ENCODE measurements at regions of chr13 and their contacts with region 1.

Region 1: DNA sequence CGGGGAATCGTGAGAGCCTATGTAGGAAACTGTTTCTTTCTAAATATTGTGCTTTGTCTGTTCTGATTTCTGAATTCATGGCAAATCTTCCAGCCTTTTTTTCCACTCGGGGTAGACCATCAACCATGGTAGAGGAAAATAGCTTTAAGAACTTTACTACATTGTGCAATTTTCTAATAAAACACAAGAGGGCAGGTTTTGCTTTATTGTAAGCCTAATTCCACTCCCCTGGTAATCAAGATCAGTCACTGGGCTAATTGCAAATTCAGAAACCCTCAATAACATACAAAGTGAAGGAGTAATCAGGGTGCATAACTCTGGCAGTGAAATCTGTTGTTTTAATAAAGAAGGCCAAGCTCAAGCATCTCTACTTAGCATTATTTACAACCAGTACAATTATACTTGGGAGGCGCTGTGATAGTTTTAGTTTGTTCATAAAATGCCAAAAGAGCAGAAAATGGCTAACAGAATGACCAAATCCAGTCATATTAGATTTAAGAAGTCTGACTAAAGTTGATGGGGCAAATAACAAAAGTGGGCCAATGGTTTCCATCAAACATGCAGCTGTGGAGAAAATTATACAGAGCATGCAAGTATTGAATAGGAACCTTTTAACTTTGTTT is 43.8 kb downstream of the DCT start:
- DNase-seq: no peak
- H3K4me3 Mint-ChIP-seq: no peak overlapping the region
- H3K27ac Mint-ChIP-seq: no peak overlapping the region
- H3K4me1 Mint-ChIP-seq: peaks cover 21% of the 10 kb centered on the region
- H3K27me3 Mint-ChIP-seq: no peaks in the 10 kb centered on the region

Region 2: DNA sequence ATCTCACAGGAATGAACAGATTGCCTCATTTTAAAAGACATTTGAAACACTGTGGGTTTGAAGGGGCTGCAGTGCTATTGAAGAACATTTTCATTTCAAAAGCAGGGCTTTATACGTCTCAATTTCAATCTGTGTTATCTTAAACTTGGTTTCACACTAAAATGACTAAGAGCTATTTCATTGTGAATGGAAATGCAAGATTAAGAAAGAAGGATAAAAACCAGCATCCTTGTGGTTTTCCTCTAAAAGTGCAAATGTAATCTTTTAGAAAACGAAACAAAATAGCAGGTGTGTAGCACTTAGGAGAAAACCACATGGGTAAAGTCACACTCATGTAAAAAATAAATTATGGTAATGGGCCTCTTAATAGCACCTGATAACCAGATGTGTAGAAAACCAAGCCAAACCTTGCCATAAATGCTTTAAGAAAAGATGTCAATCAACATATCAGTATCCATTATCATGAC is 811.4 kb before region 1 on chr13:
- intact Hi-C with region 1: no loop called
- DNase-seq: no peak
- H3K4me3 Mint-ChIP-seq: no peak overlapping the region
- H3K27ac Mint-ChIP-seq: no peak overlapping the region
- H3K4me1 Mint-ChIP-seq: no peaks in the 10 kb centered on the region
- H3K27me3 Mint-ChIP-seq: no peaks in the 10 kb centered on the region

Region 3: GRCh38 chr13:94595950-94596574 is 160.3 kb after region 1 on chr13 and contains the start of gene TGDS:
- intact Hi-C with region 1: loop called (anchors 5 kb)
- DNase-seq: peak; percentile 87
- H3K4me3 Mint-ChIP-seq: peak within 1 kb of the TSS; percentile 91
- H3K27ac Mint-ChIP-seq: peak within 1 kb of the TSS; percentile 97
- H3K4me1 Mint-ChIP-seq: peaks cover 32% of the 10 kb centered on the region
- H3K27me3 Mint-ChIP-seq: no peaks in the 10 kb centered on the region
- total RNA-seq, gene TGDS: 26.6 and 27.5 TPM in 2 replicates

Region 4: GRCh38 chr13:94617389-94618000 is 181.8 kb after region 1 on chr13:
- intact Hi-C with region 1: loop called (anchors 1 kb)
- DNase-seq: no peak
- H3K4me3 Mint-ChIP-seq: no peak overlapping the region
- H3K27ac Mint-ChIP-seq: no peak overlapping the region
- H3K4me1 Mint-ChIP-seq: peaks cover 12% of the 10 kb centered on the region
- H3K27me3 Mint-ChIP-seq: no peaks in the 10 kb centered on the region

Measured in activated T-helper 2 cell treated with anti-CD3 and anti-CD28 coated beads, Interferon-gamma antibody, Interleukin-2, Interleukin-4, amounts not matched to agents 10 μg/mL and 5 μg/mL and 100 μg/mL, durations not matched to agents 14 hours and 24 hours and 36 hours (primary cell).